ENCODE measurements at regions of chr3 and their contacts with region 1.

Region 1: GRCh38 chr3:56131974-56132590 is 336.2 kb downstream of the ERC2 start:
- DNase-seq: peak; percentile 92
- H3K4me3 ChIP-seq: no peak overlapping the region
- H3K27ac ChIP-seq: peak overlapping the region; percentile 48
- H3K4me1 ChIP-seq: peaks cover 26% of the 10 kb centered on the region
- H3K27me3 ChIP-seq: no peaks in the 10 kb centered on the region
- CTCF ChIP-seq: no peak
- POLR2A ChIP-seq: no peak

Region 2: DNA sequence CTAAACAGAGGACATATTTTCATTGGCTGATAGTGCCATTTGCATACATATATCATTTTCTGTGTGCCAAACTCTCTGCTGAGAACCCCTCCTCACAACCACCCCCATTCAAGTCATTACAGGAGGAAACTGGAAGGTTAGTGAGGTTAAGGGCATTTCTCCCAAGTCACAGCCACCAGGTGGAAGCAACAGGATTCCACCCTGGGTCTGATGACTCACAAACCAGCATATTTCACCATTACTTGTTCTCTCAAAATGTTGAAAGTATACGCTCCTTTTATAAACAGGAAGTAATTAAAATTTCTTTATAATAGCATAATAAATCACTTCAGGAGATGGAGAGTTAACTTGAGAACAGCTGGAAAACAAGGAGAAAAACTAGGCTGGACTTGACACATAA is 246.4 kb before region 1 on chr3:
- CTCF ChIA-PET with region 1: no interaction called
- POLR2A ChIA-PET with region 1: no interaction called
- dilution Hi-C with region 1: no loop called
- intact Hi-C with region 1: loop called (anchors 10 kb)
- DNase-seq: peak; percentile 84
- H3K4me3 ChIP-seq: no peak overlapping the region
- H3K27ac ChIP-seq: no peak overlapping the region
- H3K4me1 ChIP-seq: peaks cover 15% of the 10 kb centered on the region
- H3K27me3 ChIP-seq: no peaks in the 10 kb centered on the region
- CTCF ChIP-seq: no peak
- POLR2A ChIP-seq: no peak

Region 3: DNA sequence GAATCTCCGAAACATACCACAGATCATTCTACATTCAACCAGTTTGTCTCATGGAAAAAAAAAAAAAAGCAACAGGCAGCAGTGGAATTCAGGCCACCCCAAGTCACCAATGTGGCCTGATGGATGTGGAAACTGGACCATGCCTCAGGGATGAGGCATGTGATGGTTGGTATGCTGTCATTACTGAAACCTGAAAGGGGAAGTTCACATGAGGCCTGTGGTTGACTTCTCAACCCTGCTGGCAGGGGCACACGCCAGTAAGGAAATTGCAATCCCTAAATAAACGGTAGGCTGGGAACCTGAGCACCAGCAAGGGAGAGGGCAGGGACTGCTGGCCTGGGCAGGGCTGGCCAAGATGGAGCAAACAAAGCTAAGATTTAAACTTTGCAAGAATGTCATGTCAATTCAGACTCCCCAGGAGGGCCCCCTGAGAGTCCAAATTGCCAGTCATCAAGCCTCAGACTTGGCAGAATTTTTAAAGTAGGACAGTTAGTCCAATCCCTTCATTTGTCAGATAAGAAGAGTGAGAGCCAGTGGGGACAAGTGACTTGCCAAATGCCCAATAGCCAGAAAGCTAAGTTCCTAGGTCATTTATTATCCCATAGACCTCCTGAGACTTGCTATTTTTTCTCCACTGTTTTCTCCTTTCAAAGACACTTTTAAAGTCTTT is 25.7 kb after region 1 on chr3:
- CTCF ChIA-PET with region 1: no interaction called
- POLR2A ChIA-PET with region 1: no interaction called
- dilution Hi-C with region 1: no loop called
- intact Hi-C with region 1: loop called (anchors 2 kb)
- DNase-seq: no peak
- H3K4me3 ChIP-seq: no peak overlapping the region
- H3K27ac ChIP-seq: no peak overlapping the region
- H3K4me1 ChIP-seq: no peaks in the 10 kb centered on the region
- H3K27me3 ChIP-seq: no peaks in the 10 kb centered on the region
- CTCF ChIP-seq: no peak
- POLR2A ChIP-seq: no peak

Region 4: DNA sequence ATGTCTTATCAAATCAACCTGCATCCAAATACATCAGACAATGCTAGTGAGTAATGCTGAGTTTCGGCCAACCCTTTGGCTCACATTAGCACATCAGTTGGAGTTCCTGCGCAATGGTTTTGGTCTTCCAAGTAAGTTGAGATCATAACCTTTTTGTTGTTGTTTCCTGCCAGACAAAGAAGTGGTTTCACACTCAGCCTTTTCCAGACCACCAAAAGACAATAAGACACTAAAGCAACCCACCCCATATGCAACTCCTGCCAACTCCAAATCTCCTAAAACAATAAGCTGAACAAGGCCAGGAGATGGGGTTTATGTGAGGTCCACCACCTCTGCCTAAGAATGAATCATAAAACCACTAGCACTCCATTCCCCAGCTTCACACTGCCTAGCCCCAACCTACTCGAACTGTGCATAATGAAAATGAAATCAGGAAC is 159.2 kb after region 1 on chr3:
- CTCF ChIA-PET with region 1: interaction called, 3 read pairs
- POLR2A ChIA-PET with region 1: no interaction called
- dilution Hi-C with region 1: no loop called
- intact Hi-C with region 1: loop called (anchors 1 kb)
- DNase-seq: peak; percentile 98
- H3K4me3 ChIP-seq: no peak overlapping the region
- H3K27ac ChIP-seq: peak overlapping the region; percentile 90
- H3K4me1 ChIP-seq: peaks cover 24% of the 10 kb centered on the region
- H3K27me3 ChIP-seq: no peaks in the 10 kb centered on the region
- CTCF ChIP-seq: no peak
- POLR2A ChIP-seq: no peak

Region 5: DNA sequence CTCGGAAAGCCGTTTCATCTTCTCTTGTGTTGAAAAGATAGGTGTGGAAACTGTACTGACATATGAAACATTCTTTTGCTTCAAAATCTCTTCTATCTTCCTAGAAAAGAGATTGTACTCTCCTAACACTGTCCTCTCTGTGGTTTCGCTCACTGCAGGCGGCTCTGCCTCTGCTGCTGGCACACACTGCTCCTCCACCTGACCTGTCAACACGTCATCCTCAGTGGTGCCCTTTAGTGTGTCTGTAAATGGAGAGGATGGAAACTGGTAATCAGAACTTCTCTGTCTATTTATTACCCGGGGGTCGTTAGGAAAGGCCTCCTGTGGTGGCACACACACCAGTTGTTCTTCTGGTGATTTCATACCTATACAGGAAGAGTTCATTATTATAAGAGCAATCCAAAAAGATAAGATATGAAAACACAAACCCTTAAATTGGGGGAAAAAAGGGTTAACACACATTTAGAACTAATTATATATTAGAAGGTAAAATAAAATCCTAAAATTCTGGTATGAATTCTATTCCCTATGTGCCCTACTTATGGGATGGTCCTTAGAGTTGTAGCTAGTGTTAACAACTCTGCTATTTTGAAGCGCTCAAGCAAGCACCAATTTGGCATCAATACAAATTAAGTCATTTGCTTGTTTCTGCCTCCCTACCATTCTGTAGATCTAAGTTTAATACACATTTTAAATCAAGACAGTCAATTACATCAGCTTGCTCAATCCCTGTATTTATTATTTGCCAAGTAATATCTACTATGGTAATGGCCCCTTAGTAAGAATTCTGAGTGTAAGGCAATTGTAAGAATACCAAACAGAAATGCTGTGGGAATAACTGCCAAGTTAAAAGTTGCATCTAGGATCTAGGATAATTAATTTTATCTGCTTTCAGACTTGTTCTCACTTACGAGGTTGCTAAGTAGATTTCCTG is 501.8 kb after region 1 on chr3:
- CTCF ChIA-PET with region 1: no interaction called
- POLR2A ChIA-PET with region 1: no interaction called
- dilution Hi-C with region 1: no loop called
- intact Hi-C with region 1: no loop called
- DNase-seq: peak; percentile 46
- H3K4me3 ChIP-seq: no peak overlapping the region
- H3K27ac ChIP-seq: no peak overlapping the region
- H3K4me1 ChIP-seq: peaks cover 4% of the 10 kb centered on the region
- H3K27me3 ChIP-seq: no peaks in the 10 kb centered on the region
- CTCF ChIP-seq: no peak
- POLR2A ChIP-seq: no peak

Measured in endothelial cell of umbilical vein (primary cell).